B cell (primary cell): ENCODE measurements at regions of chr6 and their contacts with region 1.

Region 1: GRCh38 chr6:118651282-118652050 is at the start of gene CEP85L:
- DNase-seq: peak; percentile 92
- ATAC-seq: peak; percentile 91
- H3K4me3 ChIP-seq: peak within 1 kb of the TSS; percentile 59 to 89 (median 73)
- H3K4me3 Mint-ChIP-seq: peak within 1 kb of the TSS; percentile 98
- H3K27ac ChIP-seq: peak within 1 kb of the TSS; percentile 68 to 86
- H3K27ac Mint-ChIP-seq: peak within 1 kb of the TSS; percentile 96
- H3K4me1 ChIP-seq: peaks cover 12 to 13% of the 10 kb centered on the region in 2 donors
- H3K4me1 Mint-ChIP-seq: peaks cover 24% of the 10 kb centered on the region
- H3K27me3 ChIP-seq: no peaks in the 10 kb centered on the region
- H3K27me3 Mint-ChIP-seq: no peaks in the 10 kb centered on the region
- CTCF ChIP-seq: no peak
- total RNA-seq, gene CEP85L: 32.0 and 32.1 TPM in 2 replicates

Region 2: GRCh38 chr6:117602151-117602898 is 1049.1 kb before region 1 on chr6 and contains the start of gene GOPC:
- CTCF ChIA-PET with region 1: no interaction called
- POLR2A ChIA-PET with region 1: no interaction called
- intact Hi-C with region 1: loop called (anchors 1 kb)
- DNase-seq: peak; percentile 98
- ATAC-seq: peak; percentile 95
- H3K4me3 ChIP-seq: peak within 1 kb of the TSS; percentile 86 to 96 (median 91)
- H3K4me3 Mint-ChIP-seq: peak within 1 kb of the TSS; percentile 100
- H3K27ac ChIP-seq: peak within 1 kb of the TSS; percentile 70 to 80
- H3K27ac Mint-ChIP-seq: peak within 1 kb of the TSS; percentile 97
- H3K4me1 ChIP-seq: peaks cover 20 to 25% of the 10 kb centered on the region in 2 donors
- H3K4me1 Mint-ChIP-seq: peaks cover 45% of the 10 kb centered on the region
- H3K27me3 ChIP-seq: no peaks in the 10 kb centered on the region
- H3K27me3 Mint-ChIP-seq: peaks cover 3% of the 10 kb centered on the region
- CTCF ChIP-seq: peak; percentile 35
- total RNA-seq, gene GOPC: 25.0 and 26.7 TPM in 2 replicates

Region 3: DNA sequence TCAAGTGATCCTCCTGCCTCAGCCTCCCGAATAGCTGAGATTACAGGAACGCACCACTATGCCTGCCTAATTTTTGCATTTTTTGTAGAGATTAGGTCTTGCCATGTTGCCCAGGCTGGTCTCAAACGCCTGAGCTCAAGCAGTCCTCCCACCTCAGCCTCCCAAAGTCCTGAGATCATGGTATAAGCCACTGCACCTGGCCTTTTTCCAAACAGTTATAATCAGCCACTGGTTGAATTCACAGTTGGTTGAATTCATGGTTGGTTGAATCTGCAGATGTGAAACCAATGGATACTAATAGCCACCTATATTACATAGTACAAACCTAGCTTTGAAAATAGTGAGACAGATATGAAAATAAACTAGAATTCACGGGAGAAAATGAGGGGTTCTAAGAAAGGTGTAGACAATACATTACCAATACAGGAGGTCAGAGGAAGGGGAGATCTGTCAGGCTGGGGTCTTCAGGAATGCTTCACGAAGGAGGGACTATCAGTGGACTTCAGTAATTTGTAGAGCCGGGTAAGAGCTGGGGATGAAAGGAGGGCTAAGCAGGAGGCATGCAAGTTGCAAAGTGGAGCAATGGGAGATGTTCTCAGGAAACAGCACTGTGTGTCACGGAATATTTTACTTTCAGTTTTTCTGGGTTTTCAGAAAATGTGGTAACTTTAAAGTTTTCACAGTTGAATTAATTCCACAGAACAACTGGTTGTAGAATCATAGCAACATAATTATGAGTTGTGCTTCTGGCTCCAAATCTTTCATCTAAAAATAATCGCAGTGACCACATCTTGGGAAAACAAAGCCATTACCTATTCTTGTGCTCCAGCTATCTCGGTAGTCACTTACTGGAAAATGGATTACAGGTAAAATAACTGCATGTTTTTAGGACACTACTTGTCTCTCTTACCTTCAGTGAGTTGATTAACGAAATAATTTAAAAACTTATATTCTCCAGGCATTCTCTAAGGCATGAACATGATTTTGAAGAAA is 12.8 kb after region 1 on chr6:
- CTCF ChIA-PET with region 1: no interaction called
- POLR2A ChIA-PET with region 1: no interaction called
- intact Hi-C with region 1: loop called (anchors 1 kb)
- DNase-seq: no peak
- ATAC-seq: no peak
- H3K4me3 ChIP-seq: peak overlapping the region in 2 of 5 experiments; percentile 36 to 56
- H3K4me3 Mint-ChIP-seq: peak overlapping the region; percentile 82
- H3K27ac ChIP-seq: peak overlapping the region in 1 of 2 donors; percentile 61
- H3K27ac Mint-ChIP-seq: peak overlapping the region; percentile 86
- H3K4me1 ChIP-seq: peaks cover 13 to 18% of the 10 kb centered on the region in 2 donors
- H3K4me1 Mint-ChIP-seq: peaks cover 34% of the 10 kb centered on the region
- H3K27me3 ChIP-seq: no peaks in the 10 kb centered on the region
- H3K27me3 Mint-ChIP-seq: no peaks in the 10 kb centered on the region
- CTCF ChIP-seq: no peak

Region 4: DNA sequence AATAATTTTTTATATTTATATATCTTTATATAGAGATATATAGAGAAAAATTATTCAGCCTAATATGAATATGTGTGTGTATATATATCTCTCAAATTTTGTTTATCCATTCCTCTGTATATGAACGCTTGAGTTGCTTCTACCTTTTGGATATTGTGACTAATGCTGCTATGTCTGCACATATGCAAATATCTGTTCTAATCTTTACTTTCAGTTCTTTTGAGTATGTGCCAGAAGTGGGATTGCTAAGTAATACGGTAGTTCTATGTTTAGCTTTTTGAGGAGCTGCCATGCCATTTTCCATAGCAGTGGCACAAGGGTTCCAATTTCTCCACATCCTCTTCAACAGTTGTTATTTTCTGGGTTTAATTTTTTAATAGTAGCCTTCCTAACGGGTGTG is 72.7 kb after region 1 on chr6:
- CTCF ChIA-PET with region 1: no interaction called
- POLR2A ChIA-PET with region 1: no interaction called
- intact Hi-C with region 1: loop called (anchors 2 kb)
- DNase-seq: peak; percentile 52
- ATAC-seq: peak; percentile 70
- H3K4me3 ChIP-seq: peak overlapping the region in 2 of 5 experiments; percentile 32 to 62
- H3K4me3 Mint-ChIP-seq: peak overlapping the region; percentile 53
- H3K27ac ChIP-seq: peak overlapping the region in 1 of 2 donors; percentile 61
- H3K27ac Mint-ChIP-seq: peak overlapping the region; percentile 13
- H3K4me1 ChIP-seq: peaks cover 42 to 43% of the 10 kb centered on the region in 2 donors
- H3K4me1 Mint-ChIP-seq: peaks cover 57% of the 10 kb centered on the region
- H3K27me3 ChIP-seq: no peaks in the 10 kb centered on the region
- H3K27me3 Mint-ChIP-seq: no peaks in the 10 kb centered on the region
- CTCF ChIP-seq: no peak

Region 5: DNA sequence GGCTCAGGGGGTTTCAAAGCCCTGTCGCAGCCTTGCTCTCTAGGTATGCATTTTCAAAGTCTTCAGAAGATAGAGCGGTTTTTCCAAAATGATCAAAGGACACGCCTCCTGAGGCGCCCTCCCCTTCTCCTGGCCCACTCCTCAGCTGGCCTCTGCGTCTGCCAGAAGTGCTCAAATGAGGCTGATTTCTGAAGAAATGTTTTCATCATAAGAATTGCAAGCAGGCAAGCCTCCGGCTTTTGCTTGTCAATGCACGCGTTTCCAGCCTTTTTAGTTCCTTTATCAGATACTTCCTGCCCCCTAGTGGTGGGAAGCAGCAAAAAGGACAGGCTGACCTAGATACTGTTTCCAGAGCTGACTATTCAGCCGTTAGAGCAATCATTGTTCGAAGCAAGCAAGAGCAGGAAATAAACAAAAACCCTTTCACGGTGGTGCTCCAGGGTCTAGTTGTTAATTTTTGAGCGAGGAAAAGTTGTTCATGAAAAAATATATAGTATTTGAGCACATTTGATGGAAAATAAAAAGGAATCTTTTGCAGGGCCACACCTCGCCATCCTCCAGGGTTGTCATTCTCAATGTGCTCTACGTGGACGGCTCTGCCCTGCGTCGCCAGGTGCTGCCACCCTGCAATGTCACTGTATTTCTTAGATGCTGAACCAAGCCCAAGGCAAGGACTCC is 149.1 kb after region 1 on chr6:
- CTCF ChIA-PET with region 1: interaction called, 3 read pairs
- POLR2A ChIA-PET with region 1: no interaction called
- intact Hi-C with region 1: loop called (anchors 1 kb)
- DNase-seq: peak; percentile 81
- ATAC-seq: peak; percentile 92
- H3K4me3 ChIP-seq: peak overlapping the region in 1 of 5 experiments; percentile 5
- H3K4me3 Mint-ChIP-seq: peak overlapping the region; percentile 47
- H3K27ac ChIP-seq: no peak overlapping the region
- H3K27ac Mint-ChIP-seq: no peak overlapping the region
- H3K4me1 ChIP-seq: peaks cover 7 to 18% of the 10 kb centered on the region in 2 donors
- H3K4me1 Mint-ChIP-seq: peaks cover 24% of the 10 kb centered on the region
- H3K27me3 ChIP-seq: no peaks in the 10 kb centered on the region
- H3K27me3 Mint-ChIP-seq: no peaks in the 10 kb centered on the region
- CTCF ChIP-seq: peak; percentile 98

Region 6: GRCh38 chr6:118825661-118826060 is 174.2 kb after region 1 on chr6:
- CTCF ChIA-PET with region 1: no interaction called
- POLR2A ChIA-PET with region 1: no interaction called
- intact Hi-C with region 1: no loop called
- DNase-seq: no peak
- ATAC-seq: no peak
- H3K4me3 ChIP-seq: no peak overlapping the region
- H3K4me3 Mint-ChIP-seq: no peak overlapping the region
- H3K27ac ChIP-seq: no peak overlapping the region
- H3K27ac Mint-ChIP-seq: no peak overlapping the region
- H3K4me1 ChIP-seq: no peaks in the 10 kb centered on the region
- H3K4me1 Mint-ChIP-seq: no peaks in the 10 kb centered on the region
- H3K27me3 ChIP-seq: no peaks in the 10 kb centered on the region
- H3K27me3 Mint-ChIP-seq: no peaks in the 10 kb centered on the region
- CTCF ChIP-seq: no peak

Region 7: GRCh38 chr6:119078376-119079282 is 427.2 kb after region 1 on chr6 and contains the start of gene FAM184A:
- CTCF ChIA-PET with region 1: no interaction called
- POLR2A ChIA-PET with region 1: no interaction called
- intact Hi-C with region 1: loop called (anchors 5 kb)
- DNase-seq: peak; percentile 78
- ATAC-seq: peak; percentile 71
- H3K4me3 ChIP-seq: peak within 1 kb of the TSS; percentile 49 to 68 (median 58)
- H3K4me3 Mint-ChIP-seq: peak within 1 kb of the TSS; percentile 91
- H3K27ac ChIP-seq: no peak within 1 kb of the TSS
- H3K27ac Mint-ChIP-seq: no peak within 1 kb of the TSS
- H3K4me1 ChIP-seq: peaks cover 6 to 12% of the 10 kb centered on the region in 2 donors
- H3K4me1 Mint-ChIP-seq: peaks cover 12% of the 10 kb centered on the region
- H3K27me3 ChIP-seq: peaks cover 2 to 25% (median 15%) of the 10 kb centered on the region in 4 experiments
- H3K27me3 Mint-ChIP-seq: peaks cover 26% of the 10 kb centered on the region
- CTCF ChIP-seq: peak; percentile 20
- total RNA-seq, gene FAM184A: 0.27 and 0.54 TPM in 2 replicates